Endothelial cell of umbilical vein (primary cell): ENCODE measurements at regions of chr2 and their contacts with region 1.

Region 1: GRCh38 chr2:41955316-41956043 is 92.3 kb upstream of the PKDCC start:
- DNase-seq: no peak
- H3K4me3 ChIP-seq: no peak overlapping the region
- H3K27ac ChIP-seq: no peak overlapping the region
- H3K4me1 ChIP-seq: peaks cover 9% of the 10 kb centered on the region
- H3K27me3 ChIP-seq: peaks cover 7% of the 10 kb centered on the region in 2 experiments
- CTCF ChIP-seq: no peak
- POLR2A ChIP-seq: no peak

Region 2: DNA sequence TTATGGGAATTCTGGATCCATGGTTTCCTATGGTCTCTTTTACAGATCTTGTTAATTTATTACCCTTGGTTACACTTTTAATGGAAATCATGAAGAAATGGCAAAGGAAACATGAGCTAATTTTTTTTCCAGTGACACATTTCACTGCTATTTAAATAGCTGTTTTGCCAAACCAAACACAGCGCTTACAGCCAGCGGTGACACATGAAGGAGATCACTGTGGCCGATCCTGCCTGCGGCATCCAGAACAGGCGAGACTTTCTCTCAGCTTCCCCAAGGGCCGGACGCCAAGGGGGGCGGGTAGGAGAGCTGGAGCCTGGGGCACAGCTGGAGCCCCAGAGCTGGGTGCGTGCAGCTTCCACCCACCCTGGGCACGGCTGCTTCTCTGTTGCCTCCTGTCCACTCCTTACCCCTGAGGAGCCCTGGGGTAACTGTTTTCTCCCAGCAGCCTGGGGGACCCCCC is 11.0 kb after region 1 on chr2:
- CTCF ChIA-PET with region 1: interaction called, 8 read pairs
- POLR2A ChIA-PET with region 1: no interaction called
- dilution Hi-C with region 1: no loop called
- intact Hi-C with region 1: loop called (anchors 1 kb)
- DNase-seq: peak; percentile 93
- H3K4me3 ChIP-seq: no peak overlapping the region
- H3K27ac ChIP-seq: peak overlapping the region; percentile 60
- H3K4me1 ChIP-seq: peaks cover 24% of the 10 kb centered on the region
- H3K27me3 ChIP-seq: no peaks in the 10 kb centered on the region
- CTCF ChIP-seq: no peak
- POLR2A ChIP-seq: no peak

Region 3: GRCh38 chr2:42060718-42061619 is 105.5 kb after region 1 on chr2:
- CTCF ChIA-PET with region 1: no interaction called
- POLR2A ChIA-PET with region 1: no interaction called
- dilution Hi-C with region 1: no loop called
- intact Hi-C with region 1: loop called (anchors 5 kb)
- DNase-seq: no peak
- H3K4me3 ChIP-seq: no peak overlapping the region
- H3K27ac ChIP-seq: no peak overlapping the region
- H3K4me1 ChIP-seq: no peaks in the 10 kb centered on the region
- H3K27me3 ChIP-seq: no peaks in the 10 kb centered on the region
- CTCF ChIP-seq: no peak
- POLR2A ChIP-seq: no peak